ENCODE measurements at regions of chr2 and their contacts with region 1.

Region 1: DNA sequence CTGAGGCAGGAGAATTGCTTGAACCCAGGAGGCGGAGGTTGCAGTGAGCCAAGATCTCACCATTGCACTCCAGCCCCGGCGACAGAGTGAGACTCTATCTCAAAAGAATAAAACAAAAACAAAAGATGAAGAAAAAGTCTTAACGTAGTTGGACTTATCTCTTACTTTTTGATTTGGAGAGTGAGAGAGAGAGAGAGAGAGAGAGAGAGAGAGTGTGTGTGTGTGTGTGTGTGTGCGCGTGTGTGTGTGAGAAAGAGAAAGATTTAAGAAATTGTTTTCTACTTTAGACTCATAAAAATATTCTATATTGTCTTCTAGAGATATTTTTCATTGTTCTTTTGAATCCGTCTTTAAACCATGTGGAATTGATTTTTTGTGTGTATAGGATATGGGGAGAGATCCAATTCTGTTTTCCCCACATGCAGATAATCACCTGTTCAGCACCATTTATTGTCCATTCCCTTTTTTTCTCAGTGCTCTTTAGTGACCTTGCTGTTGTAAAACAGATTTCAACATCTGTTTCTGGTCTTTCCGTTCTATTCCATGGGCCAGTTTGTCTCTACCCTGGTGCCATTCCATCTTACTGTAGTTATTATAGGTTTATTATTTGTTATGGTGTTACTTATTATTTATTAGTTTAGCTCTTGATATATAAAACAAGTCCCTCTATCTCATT is 53.5 kb downstream of the KCMF1 start:
- DNase-seq: no peak
- ATAC-seq: no peak
- H3K4me3 ChIP-seq: no peak overlapping the region
- H3K27ac ChIP-seq: no peak overlapping the region
- H3K4me1 ChIP-seq: no peaks in the 10 kb centered on the region
- H3K27me3 ChIP-seq: no peaks in the 10 kb centered on the region
- CTCF ChIP-seq: no peak

Region 2: GRCh38 chr2:84735389-84735788 is 289.1 kb before region 1 on chr2:
- CTCF ChIA-PET with region 1: no interaction called
- POLR2A ChIA-PET with region 1: no interaction called
- in situ Hi-C with region 1: no loop called
- intact Hi-C with region 1: no loop called
- DNase-seq: no peak
- ATAC-seq: no peak
- H3K4me3 ChIP-seq: no peak overlapping the region
- H3K27ac ChIP-seq: no peak overlapping the region
- H3K4me1 ChIP-seq: no peaks in the 10 kb centered on the region
- H3K27me3 ChIP-seq: no peaks in the 10 kb centered on the region; the same call in 1 of the 2 replicates
- CTCF ChIP-seq: no peak

Region 3: GRCh38 chr2:84899304-84900204 is 125.0 kb before region 1 on chr2:
- CTCF ChIA-PET with region 1: no interaction called
- POLR2A ChIA-PET with region 1: interaction called, 29 read pairs
- in situ Hi-C with region 1: no loop called
- intact Hi-C with region 1: no loop called
- DNase-seq: no peak
- ATAC-seq: no peak
- H3K4me3 ChIP-seq: no peak overlapping the region
- H3K27ac ChIP-seq: no peak overlapping the region
- H3K4me1 ChIP-seq: peaks cover 4% of the 10 kb centered on the region; the same call in 1 of the 2 replicates
- H3K27me3 ChIP-seq: no peaks in the 10 kb centered on the region
- CTCF ChIP-seq: no peak

Region 4: GRCh38 chr2:85308896-85309555 is 284.5 kb after region 1 on chr2:
- CTCF ChIA-PET with region 1: no interaction called
- POLR2A ChIA-PET with region 1: no interaction called
- in situ Hi-C with region 1: no loop called
- intact Hi-C with region 1: no loop called
- DNase-seq: no peak
- ATAC-seq: no peak
- H3K4me3 ChIP-seq: no peak overlapping the region
- H3K27ac ChIP-seq: no peak overlapping the region
- H3K4me1 ChIP-seq: no peaks in the 10 kb centered on the region
- H3K27me3 ChIP-seq: no peaks in the 10 kb centered on the region
- CTCF ChIP-seq: no peak

Measured in Panc1 (cell line).